ENCODE measurements at regions of chr17 and their contacts with region 1.

Region 1: GRCh38 chr17:7687908-7688807 is at the start of gene WRAP53:
- DNase-seq: peak; percentile 96
- ATAC-seq: peak; percentile 76
- H3K4me3 ChIP-seq: peak within 1 kb of the TSS; percentile 68 to 100 (median 100)
- H3K4me3 Mint-ChIP-seq: peak within 1 kb of the TSS; percentile 98
- H3K27ac ChIP-seq: peak within 1 kb of the TSS; percentile 94 to 99
- H3K27ac Mint-ChIP-seq: peak within 1 kb of the TSS; percentile 100
- H3K4me1 ChIP-seq: peaks cover 22 to 32% of the 10 kb centered on the region in 2 donors
- H3K4me1 Mint-ChIP-seq: peaks cover 34% of the 10 kb centered on the region
- H3K27me3 ChIP-seq: no peaks in the 10 kb centered on the region
- H3K27me3 Mint-ChIP-seq: no peaks in the 10 kb centered on the region
- CTCF ChIP-seq: peak; percentile 100
- total RNA-seq, gene WRAP53: 17.2 and 18.2 TPM in 2 replicates

Region 2: DNA sequence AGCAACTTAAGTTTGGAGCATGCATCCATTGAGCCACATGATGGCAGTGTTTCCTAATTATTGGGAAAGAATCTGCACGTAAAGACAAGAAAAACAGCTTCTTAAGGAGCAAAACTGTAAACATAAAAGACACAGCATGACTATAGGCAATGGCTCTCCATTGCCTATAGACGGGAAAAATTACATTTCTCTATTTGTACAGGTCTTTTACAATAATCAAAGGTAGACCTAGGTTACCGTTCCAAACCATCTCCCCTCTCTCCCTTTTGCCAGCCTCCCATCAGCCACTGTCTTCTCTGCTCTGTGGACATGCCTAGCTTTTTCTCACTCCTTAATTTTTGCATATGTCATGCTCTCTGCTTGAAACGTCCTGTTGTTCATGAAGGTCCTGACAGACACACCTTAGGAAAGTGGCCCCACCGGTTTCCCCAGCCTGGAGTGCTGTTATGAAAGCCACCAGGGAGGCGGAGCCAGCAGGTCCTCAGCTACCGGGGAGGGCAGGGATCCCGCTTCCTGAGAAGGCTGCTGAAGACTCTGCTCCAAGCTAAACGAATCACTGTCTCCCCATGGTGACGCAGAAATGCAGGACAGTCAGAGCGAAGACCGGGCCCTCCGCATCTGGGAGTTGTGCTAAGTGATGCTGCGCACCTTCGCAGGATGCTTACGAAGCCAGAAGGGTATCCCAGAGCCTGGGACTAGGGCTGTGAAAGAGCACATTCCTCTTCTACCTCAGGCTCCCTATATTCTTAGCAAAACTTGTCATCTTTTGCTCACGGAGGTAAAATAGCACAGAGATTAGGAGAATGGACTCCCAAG is 642.0 kb before region 1 on chr17:
- CTCF ChIA-PET with region 1: interaction called, 9 read pairs
- POLR2A ChIA-PET with region 1: interaction called, 3 read pairs
- intact Hi-C with region 1: loop called (anchors 5 kb)
- DNase-seq: peak; percentile 85
- ATAC-seq: peak; percentile 13
- H3K4me3 ChIP-seq: peak overlapping the region; percentile 42 to 67 (median 58)
- H3K4me3 Mint-ChIP-seq: peak overlapping the region; percentile 77
- H3K27ac ChIP-seq: peak overlapping the region; percentile 61 to 81
- H3K27ac Mint-ChIP-seq: peak overlapping the region; percentile 92
- H3K4me1 ChIP-seq: peaks cover 35 to 46% of the 10 kb centered on the region in 2 donors
- H3K4me1 Mint-ChIP-seq: peaks cover 39% of the 10 kb centered on the region
- H3K27me3 ChIP-seq: peaks cover 0 to 4% (median 0%) of the 10 kb centered on the region in 4 experiments
- H3K27me3 Mint-ChIP-seq: peaks cover 3% of the 10 kb centered on the region
- CTCF ChIP-seq: peak; percentile 82

Region 3: GRCh38 chr17:7351665-7352501 is 336.3 kb before region 1 on chr17 and contains the start of gene KCTD11:
- CTCF ChIA-PET with region 1: interaction called, 20 read pairs
- POLR2A ChIA-PET with region 1: no interaction called
- intact Hi-C with region 1: loop called (anchors 1 kb)
- DNase-seq: peak; percentile 78
- ATAC-seq: peak; percentile 67
- H3K4me3 ChIP-seq: peak within 1 kb of the TSS; percentile 35 to 92 (median 84)
- H3K4me3 Mint-ChIP-seq: peak within 1 kb of the TSS; percentile 94
- H3K27ac ChIP-seq: peak within 1 kb of the TSS; percentile 63 to 90
- H3K27ac Mint-ChIP-seq: peak within 1 kb of the TSS; percentile 91
- H3K4me1 ChIP-seq: peaks cover 14 to 41% of the 10 kb centered on the region in 2 donors
- H3K4me1 Mint-ChIP-seq: peaks cover 38% of the 10 kb centered on the region
- H3K27me3 ChIP-seq: no peaks in the 10 kb centered on the region
- H3K27me3 Mint-ChIP-seq: no peaks in the 10 kb centered on the region
- CTCF ChIP-seq: peak; percentile 50
- total RNA-seq, gene KCTD11: 13.4 and 15.4 TPM in 2 replicates

Region 4: GRCh38 chr17:7561028-7561575 is 127.1 kb before region 1 on chr17:
- CTCF ChIA-PET with region 1: interaction called, 26 read pairs
- POLR2A ChIA-PET with region 1: interaction called, 8 read pairs
- intact Hi-C with region 1: no loop called
- DNase-seq: peak; percentile 89
- ATAC-seq: peak; percentile 64
- H3K4me3 ChIP-seq: peak overlapping the region; percentile 53 to 95 (median 81)
- H3K4me3 Mint-ChIP-seq: peak overlapping the region; percentile 97
- H3K27ac ChIP-seq: peak overlapping the region; percentile 97
- H3K27ac Mint-ChIP-seq: peak overlapping the region; percentile 98
- H3K4me1 ChIP-seq: peaks cover 41 to 61% of the 10 kb centered on the region in 2 donors
- H3K4me1 Mint-ChIP-seq: peaks cover 53% of the 10 kb centered on the region
- H3K27me3 ChIP-seq: no peaks in the 10 kb centered on the region
- H3K27me3 Mint-ChIP-seq: no peaks in the 10 kb centered on the region
- CTCF ChIP-seq: peak; percentile 80

Region 5: DNA sequence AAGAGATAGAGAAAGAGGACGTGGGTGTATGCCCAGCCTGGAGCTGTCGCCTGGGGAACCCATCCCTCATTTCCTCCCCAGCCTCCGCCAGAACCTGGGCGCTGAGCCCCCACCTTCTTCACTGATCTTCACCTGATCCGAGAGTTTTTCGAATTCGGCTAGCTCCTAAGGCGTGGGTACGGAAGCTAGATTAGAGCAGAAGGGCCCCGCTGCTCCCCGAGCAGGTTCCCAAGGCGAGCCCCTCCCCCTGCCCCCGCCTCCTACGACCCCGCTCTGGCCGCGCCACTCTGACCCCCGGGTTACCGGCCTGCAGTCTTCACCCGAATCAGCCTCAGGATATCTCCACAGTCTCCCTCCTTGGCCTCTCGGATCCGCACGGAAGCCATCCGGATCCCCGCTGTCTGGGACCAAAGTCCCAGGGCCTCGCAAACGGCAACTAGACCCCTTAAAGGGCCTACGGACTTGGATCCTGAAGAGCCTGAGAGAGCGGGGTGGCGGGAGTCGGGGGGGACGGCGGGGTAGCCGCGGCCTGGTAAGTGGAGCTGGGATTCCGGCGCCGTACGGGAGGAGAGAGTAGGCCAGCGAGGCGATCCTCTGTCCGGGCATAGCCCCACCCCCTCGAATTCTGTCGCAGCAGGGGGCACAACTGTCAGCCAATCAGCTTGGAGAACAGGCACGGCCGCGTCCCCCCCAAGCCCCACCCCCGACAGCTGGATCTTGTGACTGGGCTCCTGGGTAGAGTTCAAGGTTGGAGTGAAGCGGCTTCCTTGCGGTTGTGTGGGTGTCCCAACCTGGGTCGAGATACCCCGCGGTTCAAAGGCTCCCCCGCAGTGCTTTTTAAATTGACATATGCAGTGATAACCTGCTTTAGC is 60.7 kb before region 1 on chr17 and contains the start of gene SAT2:
- CTCF ChIA-PET with region 1: interaction called, 35 read pairs
- POLR2A ChIA-PET with region 1: interaction called, 11 read pairs
- intact Hi-C with region 1: loop called (anchors 1 kb)
- DNase-seq: peak; percentile 92
- ATAC-seq: peak; percentile 99
- H3K4me3 ChIP-seq: peak within 1 kb of the TSS; percentile 55 to 97 (median 89)
- H3K4me3 Mint-ChIP-seq: peak within 1 kb of the TSS; percentile 93
- H3K27ac ChIP-seq: peak within 1 kb of the TSS; percentile 79 to 88
- H3K27ac Mint-ChIP-seq: peak within 1 kb of the TSS; percentile 92
- H3K4me1 ChIP-seq: peaks cover 6 to 14% of the 10 kb centered on the region in 2 donors
- H3K4me1 Mint-ChIP-seq: peaks cover 17% of the 10 kb centered on the region
- H3K27me3 ChIP-seq: no peaks in the 10 kb centered on the region
- H3K27me3 Mint-ChIP-seq: no peaks in the 10 kb centered on the region
- CTCF ChIP-seq: no peak
- total RNA-seq, gene SAT2: 68.8 and 83.6 TPM in 2 replicates

Region 6: DNA sequence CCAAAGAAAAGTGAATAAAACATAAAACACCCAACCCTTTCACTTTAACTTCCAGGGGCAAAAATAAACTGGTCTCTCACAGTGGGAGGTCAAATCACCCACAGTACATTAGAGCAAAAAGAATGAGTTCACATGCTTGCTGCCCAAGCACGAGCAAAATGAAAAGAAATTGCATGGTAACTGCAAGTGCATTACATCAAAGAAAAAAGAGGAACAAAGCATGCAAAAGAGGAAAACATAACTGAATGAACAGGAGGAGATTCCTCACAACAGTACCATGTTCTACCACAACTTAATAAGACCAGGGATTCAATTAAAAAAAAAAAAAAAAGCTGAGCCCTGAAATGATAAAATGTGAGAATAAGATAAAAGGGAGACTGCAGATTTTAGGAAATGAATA is 41.7 kb after region 1 on chr17:
- CTCF ChIA-PET with region 1: no interaction called
- POLR2A ChIA-PET with region 1: no interaction called
- intact Hi-C with region 1: no loop called
- DNase-seq: no peak
- ATAC-seq: no peak
- H3K4me3 ChIP-seq: no peak overlapping the region
- H3K4me3 Mint-ChIP-seq: no peak overlapping the region
- H3K27ac ChIP-seq: no peak overlapping the region
- H3K27ac Mint-ChIP-seq: no peak overlapping the region
- H3K4me1 ChIP-seq: peaks cover 4 to 6% of the 10 kb centered on the region in 2 donors
- H3K4me1 Mint-ChIP-seq: peaks cover 6% of the 10 kb centered on the region
- H3K27me3 ChIP-seq: peaks cover 0 to 5% (median 0%) of the 10 kb centered on the region in 4 experiments
- H3K27me3 Mint-ChIP-seq: peaks cover 22% of the 10 kb centered on the region
- CTCF ChIP-seq: no peak

Region 7: DNA sequence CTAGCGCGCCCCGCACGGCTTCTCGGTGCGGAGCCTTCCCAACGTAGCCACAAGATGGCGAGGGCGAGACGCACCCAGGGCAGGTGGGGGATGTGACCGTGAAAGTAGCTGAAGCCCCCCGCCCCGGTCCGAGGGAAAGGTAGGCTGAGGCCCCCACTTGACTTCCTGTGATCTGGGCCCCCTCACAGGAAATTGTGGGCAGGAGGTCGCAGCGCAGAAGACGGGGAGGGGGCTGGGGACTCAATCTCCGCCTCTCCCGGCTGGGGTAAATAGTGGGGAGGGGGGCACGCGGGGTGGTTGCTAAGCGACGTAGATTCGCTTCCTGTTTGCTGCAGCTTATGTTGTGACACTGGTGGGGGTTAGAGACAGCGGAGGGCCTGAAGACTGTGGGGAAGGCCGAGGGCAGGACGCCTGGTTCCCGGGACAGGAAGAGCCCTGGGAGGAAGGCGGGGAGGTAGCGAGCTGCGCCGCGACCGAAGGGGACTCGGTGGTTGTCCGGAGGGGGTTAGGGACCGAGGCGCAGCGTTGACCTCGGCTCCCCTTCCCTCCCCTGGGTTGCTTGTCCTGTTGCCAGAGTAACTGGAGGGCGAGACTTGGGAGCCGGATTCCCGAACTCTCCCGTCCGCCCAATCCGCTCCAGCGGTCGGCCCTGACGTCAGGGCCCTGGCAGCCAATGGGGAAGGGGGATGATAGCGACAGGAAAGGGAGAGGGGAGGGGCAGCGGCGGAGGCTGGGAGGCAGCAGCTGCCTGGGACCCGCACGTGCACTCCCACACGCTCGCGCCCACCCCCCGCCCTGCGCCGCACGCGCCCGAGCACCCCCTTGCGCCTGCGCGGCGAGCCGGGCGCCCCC is 147.0 kb after region 1 on chr17:
- CTCF ChIA-PET with region 1: no interaction called
- POLR2A ChIA-PET with region 1: interaction called, 10 read pairs
- intact Hi-C with region 1: loop called (anchors 5 kb)
- DNase-seq: peak; percentile 96
- ATAC-seq: peak; percentile 44
- H3K4me3 ChIP-seq: peak overlapping the region; percentile 42 to 99 (median 95)
- H3K4me3 Mint-ChIP-seq: peak overlapping the region; percentile 99
- H3K27ac ChIP-seq: peak overlapping the region; percentile 93 to 100
- H3K27ac Mint-ChIP-seq: peak overlapping the region; percentile 97
- H3K4me1 ChIP-seq: peaks cover 38 to 56% of the 10 kb centered on the region in 2 donors
- H3K4me1 Mint-ChIP-seq: peaks cover 46% of the 10 kb centered on the region
- H3K27me3 ChIP-seq: peaks cover 0 to 13% (median under 1%) of the 10 kb centered on the region in 4 experiments
- H3K27me3 Mint-ChIP-seq: peaks cover 15% of the 10 kb centered on the region
- CTCF ChIP-seq: peak; percentile 86

Region 8: DNA sequence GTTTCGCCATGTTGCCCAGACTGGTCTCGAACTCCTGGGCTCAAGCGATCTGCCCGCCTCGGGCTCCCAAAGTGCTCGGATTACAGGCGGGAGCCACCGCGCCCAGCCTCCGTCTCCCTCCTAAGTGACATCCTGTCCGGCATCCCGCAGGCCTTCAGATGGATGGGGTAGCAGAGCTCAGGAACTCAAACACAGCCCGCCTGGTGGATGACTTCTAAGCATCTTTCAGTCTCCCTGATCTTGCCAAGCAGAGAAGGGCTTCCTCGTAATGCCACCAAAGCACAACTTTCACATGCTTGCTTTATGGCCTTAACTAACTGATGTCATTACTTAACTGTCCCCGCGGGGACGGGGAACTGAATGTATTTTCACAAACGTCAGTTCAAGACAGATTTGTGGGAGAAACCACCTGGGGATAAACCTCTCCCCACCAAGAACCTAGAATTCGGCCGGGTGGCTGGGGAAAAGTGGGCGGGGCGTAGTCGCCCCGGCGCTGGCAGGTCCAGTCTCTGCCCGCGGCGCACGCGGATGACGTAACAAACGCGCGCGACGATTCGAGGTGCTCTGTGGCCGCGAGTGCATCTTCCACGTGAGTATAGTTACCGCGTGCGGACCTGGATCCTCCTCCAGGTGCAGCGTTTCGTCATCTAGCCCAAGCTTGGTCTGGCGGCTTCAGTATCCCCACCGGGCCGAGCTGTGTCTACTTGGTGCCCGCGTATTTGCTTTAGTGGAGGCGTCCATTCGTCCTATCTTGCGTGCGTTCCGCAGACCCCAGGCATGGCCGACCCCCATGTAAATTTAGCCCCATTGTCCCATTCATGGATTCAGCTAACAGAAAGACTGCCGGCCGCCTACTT is 560.8 kb after region 1 on chr17 and contains the start of gene PFAS:
- CTCF ChIA-PET with region 1: interaction called, 5 read pairs
- POLR2A ChIA-PET with region 1: interaction called, 4 read pairs
- intact Hi-C with region 1: loop called (anchors 2 kb)
- DNase-seq: peak; percentile 98
- ATAC-seq: peak; percentile 48
- H3K4me3 ChIP-seq: peak within 1 kb of the TSS; percentile 65 to 100 (median 78)
- H3K4me3 Mint-ChIP-seq: peak within 1 kb of the TSS; percentile 96
- H3K27ac ChIP-seq: peak within 1 kb of the TSS; percentile 99 to 100
- H3K27ac Mint-ChIP-seq: peak within 1 kb of the TSS; percentile 100
- H3K4me1 ChIP-seq: peaks cover 29 to 37% of the 10 kb centered on the region in 2 donors
- H3K4me1 Mint-ChIP-seq: peaks cover 44% of the 10 kb centered on the region
- H3K27me3 ChIP-seq: no peaks in the 10 kb centered on the region
- H3K27me3 Mint-ChIP-seq: no peaks in the 10 kb centered on the region
- CTCF ChIP-seq: no peak
- total RNA-seq, gene PFAS: 65.5 and 66.4 TPM in 2 replicates